HCT116 (cell line): ENCODE measurements at regions of chr9 and their contacts with region 1.

Region 1: DNA sequence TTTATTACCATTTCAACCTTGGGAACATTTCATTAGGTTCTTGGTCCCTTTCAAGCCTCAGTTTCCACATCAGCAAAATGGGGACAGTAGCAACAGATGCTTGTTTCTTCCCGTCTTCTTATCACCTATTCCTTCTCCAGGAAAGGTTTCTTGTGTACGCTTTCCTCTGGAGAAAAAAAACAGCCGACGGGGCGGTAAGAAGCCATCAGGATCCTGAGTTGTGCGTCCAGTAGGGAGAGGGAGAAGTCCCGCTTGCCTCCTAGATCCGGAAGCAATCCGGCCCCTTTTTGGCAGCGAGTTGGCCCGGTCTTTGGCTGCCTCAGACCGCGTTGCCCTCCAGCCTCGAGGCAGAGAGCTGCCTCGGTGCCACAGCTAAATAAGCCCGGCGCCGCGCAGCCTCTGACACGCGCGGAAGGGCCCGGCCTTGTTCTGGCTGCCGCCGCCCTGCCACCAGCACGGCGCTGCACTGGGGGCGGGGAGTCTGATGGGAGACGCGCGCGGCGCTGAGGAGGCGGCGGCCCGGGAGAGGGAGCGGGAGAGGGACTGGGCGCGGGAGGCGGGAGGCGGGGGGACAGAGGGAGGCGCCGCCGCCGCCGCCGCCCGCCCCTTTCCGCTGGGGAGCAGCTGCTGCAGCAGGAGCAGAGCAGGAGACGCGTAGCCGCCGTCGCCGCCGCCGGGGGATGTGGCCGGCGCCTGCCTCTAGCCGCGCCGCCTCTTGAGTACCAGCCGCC is at the start of gene SLC44A1:
- DNase-seq: peak; percentile 83
- ATAC-seq: peak; percentile 92
- H3K4me3 ChIP-seq: peak within 1 kb of the TSS; percentile 59 to 94
- H3K27ac ChIP-seq: peak within 1 kb of the TSS; percentile 90
- H3K4me1 ChIP-seq: peaks cover 8 to 17% of the 10 kb centered on the region in 2 experiments; a peak in 3 of 4 replicates
- H3K27me3 ChIP-seq: peaks cover 20% of the 10 kb centered on the region
- CTCF ChIP-seq: no peak
- POLR2A ChIP-seq: peak; percentile 42
- RAD21 ChIP-seq: no peak
- total RNA-seq, gene SLC44A1: 44.1 TPM

Region 2: GRCh38 chr9:104863180-104863883 is 380.8 kb before region 1 on chr9:
- CTCF ChIA-PET with region 1: no interaction called
- POLR2A ChIA-PET with region 1: no interaction called
- RAD21 ChIA-PET with region 1: no interaction called
- intact Hi-C with region 1: loop called (anchors 10 kb)
- DNase-seq: peak; percentile 44
- ATAC-seq: peak; percentile 89
- H3K4me3 ChIP-seq: no peak overlapping the region
- H3K27ac ChIP-seq: no peak overlapping the region
- H3K4me1 ChIP-seq: peaks cover 0 to under 1% of the 10 kb centered on the region in 2 experiments; a peak in 1 of 4 replicates
- H3K27me3 ChIP-seq: no peaks in the 10 kb centered on the region
- CTCF ChIP-seq: peak; percentile 81 to 92 (median 82); a peak in 5 of 6 replicates
- POLR2A ChIP-seq: no peak
- RAD21 ChIP-seq: peak; percentile 91

Region 3: GRCh38 chr9:104927912-104928740 is 316.0 kb before region 1 on chr9 and contains the start of gene ABCA1:
- CTCF ChIA-PET with region 1: no interaction called
- POLR2A ChIA-PET with region 1: no interaction called
- RAD21 ChIA-PET with region 1: no interaction called
- intact Hi-C with region 1: loop called (anchors 5 kb)
- DNase-seq: peak; percentile 29
- ATAC-seq: peak; percentile 50
- H3K4me3 ChIP-seq: peak within 1 kb of the TSS; percentile 49 to 57
- H3K27ac ChIP-seq: peak within 1 kb of the TSS; percentile 33; the same call in 1 of the 2 replicates
- H3K4me1 ChIP-seq: peaks cover 6 to 18% of the 10 kb centered on the region in 2 experiments
- H3K27me3 ChIP-seq: no peaks in the 10 kb centered on the region
- CTCF ChIP-seq: no peak
- POLR2A ChIP-seq: no peak
- RAD21 ChIP-seq: no peak
- total RNA-seq, gene ABCA1: 0.89 TPM

Region 4: DNA sequence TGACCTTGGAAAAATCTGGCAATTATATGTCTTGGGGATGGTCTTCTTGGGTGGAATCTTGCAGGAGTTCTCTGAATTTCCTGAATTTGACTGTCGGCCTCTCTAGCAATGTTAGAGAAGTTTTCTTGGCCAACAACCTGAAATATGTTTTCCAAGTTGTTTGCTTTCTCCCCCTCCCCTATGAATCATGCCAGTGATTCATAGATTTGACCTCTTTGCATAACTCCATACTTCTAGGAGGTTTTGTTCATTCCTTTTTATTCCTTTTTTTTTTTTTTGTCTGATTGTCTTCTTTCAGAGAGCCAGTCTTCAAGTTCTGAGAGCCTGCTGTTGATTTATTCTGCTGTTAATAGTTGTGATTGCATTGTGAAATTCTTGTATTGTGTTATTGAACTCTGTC is 56.4 kb before region 1 on chr9:
- CTCF ChIA-PET with region 1: no interaction called
- POLR2A ChIA-PET with region 1: no interaction called
- RAD21 ChIA-PET with region 1: no interaction called
- intact Hi-C with region 1: loop called (anchors 10 kb)
- DNase-seq: no peak
- ATAC-seq: no peak
- H3K4me3 ChIP-seq: no peak overlapping the region
- H3K27ac ChIP-seq: no peak overlapping the region
- H3K4me1 ChIP-seq: peaks cover 0 to 6% of the 10 kb centered on the region in 2 experiments; a peak in 2 of 4 replicates
- H3K27me3 ChIP-seq: no peaks in the 10 kb centered on the region
- CTCF ChIP-seq: no peak
- POLR2A ChIP-seq: no peak
- RAD21 ChIP-seq: no peak